Caco-2 (cell line): ENCODE measurements at regions of chr19 and their contacts with region 1.

Region 1: DNA sequence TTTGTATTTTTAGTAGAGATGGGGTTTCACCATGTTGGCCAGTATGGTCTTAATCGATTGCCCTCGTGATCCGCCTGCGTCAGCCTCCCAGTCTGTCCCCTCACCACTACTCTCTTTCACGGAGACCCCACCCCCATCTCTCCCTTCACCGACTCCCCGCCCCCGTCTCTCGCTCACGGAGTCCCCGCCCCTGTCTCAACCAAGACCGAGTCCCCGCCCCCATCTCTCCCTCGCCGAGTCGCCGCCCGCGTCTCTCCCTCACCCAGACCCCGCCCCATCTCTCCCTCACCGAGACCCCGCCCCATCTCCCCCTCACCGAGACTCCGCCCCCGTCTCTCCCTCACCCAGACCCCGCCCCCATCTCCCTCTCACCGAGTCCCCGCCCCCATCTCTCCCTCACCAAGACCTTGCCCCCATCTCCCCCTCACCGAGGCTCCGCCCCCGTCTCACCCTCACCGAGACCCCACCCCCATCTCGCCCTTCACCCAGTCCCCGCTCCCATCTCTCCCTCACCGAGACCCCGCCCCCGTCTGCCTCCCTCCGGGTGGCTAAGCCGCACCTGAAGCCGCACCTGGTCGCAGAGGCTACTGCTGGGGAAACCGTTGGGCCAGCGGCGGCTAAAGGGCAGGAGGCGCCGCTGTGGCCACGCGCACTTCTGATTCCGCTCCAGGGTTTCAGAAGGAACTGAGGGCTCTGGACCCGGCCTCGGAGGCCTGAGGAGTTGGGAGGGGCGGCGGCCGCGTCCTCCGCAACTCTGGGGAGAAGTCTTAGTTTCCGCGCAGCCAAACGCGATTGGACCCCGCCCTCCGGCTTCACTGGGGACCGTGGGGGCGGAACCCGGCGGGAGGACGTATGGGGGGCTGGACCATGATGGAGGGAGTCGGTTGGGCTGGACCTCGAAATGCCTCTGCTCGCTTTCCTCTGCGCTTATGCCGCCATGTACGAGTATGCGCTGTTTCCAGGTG is 17.1 kb upstream of the ZNF846 start:
- DNase-seq: peak; percentile 98
- H3K4me3 ChIP-seq: peak overlapping the region; percentile 49
- H3K4me3 Mint-ChIP-seq: peak overlapping the region; percentile 90
- H3K27ac Mint-ChIP-seq: peak overlapping the region; percentile 100
- H3K4me1 ChIP-seq: peaks cover 24% of the 10 kb centered on the region
- H3K4me1 Mint-ChIP-seq: peaks cover 22% of the 10 kb centered on the region
- H3K27me3 ChIP-seq: no peaks in the 10 kb centered on the region
- H3K27me3 Mint-ChIP-seq: no peaks in the 10 kb centered on the region
- CTCF ChIP-seq: no peak

Region 2: DNA sequence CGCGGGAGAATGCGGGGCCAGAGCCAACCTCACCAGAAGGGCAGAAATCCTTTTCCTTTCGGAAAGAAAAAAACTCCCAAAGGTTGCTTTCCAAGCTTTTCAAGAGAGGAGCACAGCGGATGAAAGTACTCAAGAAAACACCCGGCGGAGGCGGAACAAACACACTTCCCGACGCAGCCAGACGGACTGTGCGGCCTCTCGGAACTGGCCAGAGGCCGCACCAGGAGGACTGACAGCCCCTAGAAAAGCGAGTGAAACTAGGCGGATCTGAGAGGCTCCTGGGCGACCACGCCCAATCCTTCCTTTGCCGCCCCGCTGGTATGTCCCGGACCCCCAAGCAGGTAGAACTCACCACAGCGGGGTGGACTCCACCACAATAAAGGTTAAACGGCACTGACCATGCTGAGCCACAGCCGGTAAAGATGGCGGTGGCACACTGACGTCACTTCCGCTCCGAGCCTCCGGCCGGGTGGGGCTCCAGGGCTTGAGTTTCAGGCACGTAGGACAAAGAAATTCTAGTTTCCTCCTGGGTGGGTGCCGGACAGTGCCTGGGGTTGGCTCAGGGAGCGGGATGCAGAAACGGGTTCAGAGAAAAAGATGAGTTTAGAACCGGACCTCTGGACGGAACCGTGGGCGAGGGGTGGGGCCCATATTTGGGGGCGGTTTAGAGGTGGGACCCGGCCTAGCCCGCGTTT is 110.8 kb before region 1 on chr19 and contains the start of gene ZNF562:
- CTCF ChIA-PET with region 1: no interaction called
- POLR2A ChIA-PET with region 1: no interaction called
- intact Hi-C with region 1: loop called (anchors 2 kb)
- DNase-seq: peak; percentile 90
- H3K4me3 ChIP-seq: peak within 1 kb of the TSS; percentile 76
- H3K4me3 Mint-ChIP-seq: peak within 1 kb of the TSS; percentile 95
- H3K27ac Mint-ChIP-seq: peak within 1 kb of the TSS; percentile 100
- H3K4me1 ChIP-seq: no peaks in the 10 kb centered on the region
- H3K4me1 Mint-ChIP-seq: no peaks in the 10 kb centered on the region
- H3K27me3 ChIP-seq: no peaks in the 10 kb centered on the region
- H3K27me3 Mint-ChIP-seq: no peaks in the 10 kb centered on the region
- CTCF ChIP-seq: no peak
- total RNA-seq, gene ZNF562: 23.0 and 23.7 TPM in 2 replicates

Region 3: GRCh38 chr19:9768175-9769112 is 17.2 kb before region 1 on chr19 and contains the start of gene ZNF846:
- CTCF ChIA-PET with region 1: no interaction called
- POLR2A ChIA-PET with region 1: no interaction called
- intact Hi-C with region 1: loop called (anchors 1 kb)
- DNase-seq: peak; percentile 95 to 97
- H3K4me3 ChIP-seq: peak within 1 kb of the TSS; percentile 89
- H3K4me3 Mint-ChIP-seq: peak within 1 kb of the TSS; percentile 96
- H3K27ac Mint-ChIP-seq: peak within 1 kb of the TSS; percentile 96
- H3K4me1 ChIP-seq: no peaks in the 10 kb centered on the region
- H3K4me1 Mint-ChIP-seq: no peaks in the 10 kb centered on the region
- H3K27me3 ChIP-seq: no peaks in the 10 kb centered on the region
- H3K27me3 Mint-ChIP-seq: no peaks in the 10 kb centered on the region
- CTCF ChIP-seq: no peak
- total RNA-seq, gene ZNF846: 5.3 and 6.2 TPM in 2 replicates

Region 4: DNA sequence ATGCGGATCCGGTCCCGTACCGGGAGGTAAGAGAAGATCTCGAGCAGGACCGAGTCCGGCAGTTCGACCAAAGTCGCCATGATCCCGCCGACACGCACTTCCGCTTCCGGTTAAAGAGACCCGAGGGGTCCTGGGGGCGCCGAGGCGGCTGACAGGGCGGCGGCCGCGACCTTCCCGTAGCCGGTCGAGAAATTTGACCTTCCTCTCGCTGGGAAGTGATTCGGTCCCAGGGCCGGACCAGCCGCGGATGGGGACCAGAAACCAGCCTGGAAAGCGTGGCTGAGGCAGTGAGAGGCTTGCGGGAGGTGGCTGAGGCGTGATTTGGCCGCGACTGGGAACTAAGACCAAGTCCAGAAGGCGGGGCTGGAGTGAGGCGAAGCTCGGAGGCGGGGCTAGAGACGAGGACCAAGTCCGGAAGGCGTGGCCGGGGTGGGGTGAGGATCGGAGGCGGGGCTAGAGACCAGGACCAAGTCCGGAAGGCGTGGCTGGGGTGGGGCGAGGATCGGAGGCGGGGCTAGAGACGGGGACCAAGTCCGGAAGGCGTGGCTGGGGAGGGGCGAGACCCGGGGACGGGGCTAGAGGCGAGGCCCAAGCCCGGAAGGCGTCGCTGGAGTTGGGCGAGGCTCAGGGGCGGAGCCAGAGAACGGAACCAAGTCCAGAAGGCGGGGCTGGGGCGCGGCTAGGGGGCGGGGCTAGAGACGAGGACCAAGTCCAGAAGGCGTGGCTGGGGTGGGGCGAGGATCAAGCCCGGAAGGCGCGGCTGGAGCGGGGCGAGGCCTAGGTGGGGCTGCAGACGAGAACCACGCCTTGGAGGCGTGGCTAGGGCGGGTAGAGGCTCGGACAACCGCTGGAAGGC is 33.3 kb after region 1 on chr19 and contains the start of gene FBXL12:
- CTCF ChIA-PET with region 1: no interaction called
- POLR2A ChIA-PET with region 1: no interaction called
- intact Hi-C with region 1: loop called (anchors 1 kb)
- DNase-seq: peak; percentile 99 to 100
- H3K4me3 ChIP-seq: peak within 1 kb of the TSS; percentile 73
- H3K4me3 Mint-ChIP-seq: peak within 1 kb of the TSS; percentile 90
- H3K27ac Mint-ChIP-seq: peak within 1 kb of the TSS; percentile 92
- H3K4me1 ChIP-seq: peaks cover 5% of the 10 kb centered on the region
- H3K4me1 Mint-ChIP-seq: peaks cover 5% of the 10 kb centered on the region
- H3K27me3 ChIP-seq: no peaks in the 10 kb centered on the region
- H3K27me3 Mint-ChIP-seq: no peaks in the 10 kb centered on the region
- CTCF ChIP-seq: no peak
- total RNA-seq, gene FBXL12: 37.6 and 39.9 TPM in 2 replicates